ENCODE measurements at regions of chr15 and their contacts with region 1.

Region 1: DNA sequence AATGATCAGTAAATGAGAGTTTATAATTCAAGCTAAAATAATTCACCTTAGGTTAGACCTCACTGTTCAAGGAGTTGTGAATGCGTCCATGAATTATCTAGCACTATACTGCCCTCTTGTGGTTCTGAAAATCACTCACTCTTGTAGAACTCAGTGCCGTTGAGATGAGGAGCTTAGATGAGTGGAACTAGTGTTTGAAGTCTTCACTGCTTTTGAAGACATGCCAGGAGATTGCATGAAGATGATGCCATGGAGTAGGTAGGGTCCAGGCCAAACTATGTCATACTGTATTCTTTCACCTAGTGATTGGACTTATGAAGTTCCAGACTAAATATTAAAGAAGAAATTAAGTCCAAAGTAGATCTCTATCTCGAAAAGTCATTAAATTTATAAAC is 28.8 kb downstream of the LYSMD4 start:
- DNase-seq: peak in 4 of 9 experiments; percentile 19 to 85 (median 58)
- ATAC-seq: peak; percentile 74
- H3K4me3 ChIP-seq: no peak overlapping the region
- H3K4me3 Mint-ChIP-seq: no peak overlapping the region
- H3K27ac ChIP-seq: no peak overlapping the region
- H3K27ac Mint-ChIP-seq: no peak overlapping the region
- H3K4me1 ChIP-seq: peaks cover 38% of the 10 kb centered on the region
- H3K4me1 Mint-ChIP-seq: peaks cover 51% of the 10 kb centered on the region
- H3K27me3 ChIP-seq: no peaks in the 10 kb centered on the region
- H3K27me3 Mint-ChIP-seq: no peaks in the 10 kb centered on the region
- CTCF ChIP-seq: peak; percentile 63

Region 2: GRCh38 chr15:99282121-99282520 is 422.3 kb before region 1 on chr15:
- CTCF ChIA-PET with region 1: interaction called, 29 read pairs
- POLR2A ChIA-PET with region 1: interaction called, 3 read pairs
- intact Hi-C with region 1: loop called (anchors 1 kb)
- DNase-seq: no peak
- ATAC-seq: no peak
- H3K4me3 ChIP-seq: no peak overlapping the region
- H3K4me3 Mint-ChIP-seq: no peak overlapping the region
- H3K27ac ChIP-seq: no peak overlapping the region
- H3K27ac Mint-ChIP-seq: no peak overlapping the region
- H3K4me1 ChIP-seq: no peaks in the 10 kb centered on the region
- H3K4me1 Mint-ChIP-seq: peaks cover 14% of the 10 kb centered on the region
- H3K27me3 ChIP-seq: no peaks in the 10 kb centered on the region
- H3K27me3 Mint-ChIP-seq: no peaks in the 10 kb centered on the region
- CTCF ChIP-seq: no peak

Region 3: DNA sequence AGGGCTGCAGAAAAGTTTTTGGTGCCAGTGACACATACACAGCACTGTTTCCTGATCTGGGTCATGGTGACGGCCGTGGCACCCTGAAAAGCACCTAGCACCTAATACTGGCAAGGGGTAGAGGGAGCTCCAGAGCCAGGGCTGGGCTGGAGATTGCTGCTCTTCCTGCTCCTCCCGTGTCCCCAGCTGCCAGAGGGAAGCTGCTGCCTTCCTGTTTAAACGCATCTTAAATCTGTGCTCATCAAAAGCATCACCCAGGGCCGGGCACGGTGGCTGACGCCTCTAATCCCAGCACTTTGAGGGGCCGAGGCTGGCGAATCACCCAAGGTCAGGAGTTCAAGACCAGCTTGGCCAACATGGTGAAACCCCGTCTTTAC is 295.4 kb before region 1 on chr15:
- CTCF ChIA-PET with region 1: interaction called, 34 read pairs
- POLR2A ChIA-PET with region 1: interaction called, 4 read pairs
- intact Hi-C with region 1: loop called (anchors 1 to 5 kb)
- DNase-seq: peak in 5 of 9 experiments; percentile 22 to 65 (median 50)
- ATAC-seq: peak; percentile 77
- H3K4me3 ChIP-seq: no peak overlapping the region
- H3K4me3 Mint-ChIP-seq: no peak overlapping the region
- H3K27ac ChIP-seq: no peak overlapping the region
- H3K27ac Mint-ChIP-seq: no peak overlapping the region
- H3K4me1 ChIP-seq: peaks cover 20% of the 10 kb centered on the region
- H3K4me1 Mint-ChIP-seq: peaks cover 24% of the 10 kb centered on the region
- H3K27me3 ChIP-seq: no peaks in the 10 kb centered on the region
- H3K27me3 Mint-ChIP-seq: no peaks in the 10 kb centered on the region
- CTCF ChIP-seq: peak; percentile 25

Region 4: DNA sequence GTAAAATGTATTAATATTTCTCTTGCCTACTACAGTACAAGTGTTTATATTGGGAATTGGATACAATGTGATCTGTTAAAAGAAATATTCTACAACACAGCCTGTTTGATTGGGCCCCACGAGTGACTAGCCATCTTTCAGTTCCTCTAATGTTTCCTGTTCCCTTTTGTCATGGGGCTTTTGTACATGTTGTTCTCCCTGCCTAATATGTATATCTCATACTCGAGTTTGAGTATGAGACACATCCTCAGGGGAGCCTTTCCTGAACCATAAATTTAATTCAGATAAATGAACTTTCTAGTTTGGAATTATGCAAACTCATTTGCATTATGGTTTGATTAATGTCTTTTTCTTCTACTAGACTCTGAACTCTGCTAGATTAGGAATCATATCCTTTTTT is 73.2 kb before region 1 on chr15:
- CTCF ChIA-PET with region 1: no interaction called
- POLR2A ChIA-PET with region 1: no interaction called
- intact Hi-C with region 1: no loop called
- DNase-seq: peak in 1 of 9 experiments; percentile 16
- ATAC-seq: no peak
- H3K4me3 ChIP-seq: no peak overlapping the region
- H3K4me3 Mint-ChIP-seq: no peak overlapping the region
- H3K27ac ChIP-seq: no peak overlapping the region
- H3K27ac Mint-ChIP-seq: peak overlapping the region; percentile 2
- H3K4me1 ChIP-seq: no peaks in the 10 kb centered on the region
- H3K4me1 Mint-ChIP-seq: peaks cover 48% of the 10 kb centered on the region
- H3K27me3 ChIP-seq: no peaks in the 10 kb centered on the region
- H3K27me3 Mint-ChIP-seq: no peaks in the 10 kb centered on the region
- CTCF ChIP-seq: no peak

Region 5: GRCh38 chr15:99686290-99686689 is 18.2 kb before region 1 on chr15:
- CTCF ChIA-PET with region 1: interaction called, 25 read pairs
- POLR2A ChIA-PET with region 1: interaction called, 3 read pairs
- intact Hi-C with region 1: no loop called
- DNase-seq: no peak
- ATAC-seq: no peak
- H3K4me3 ChIP-seq: no peak overlapping the region
- H3K4me3 Mint-ChIP-seq: no peak overlapping the region
- H3K27ac ChIP-seq: no peak overlapping the region
- H3K27ac Mint-ChIP-seq: no peak overlapping the region
- H3K4me1 ChIP-seq: peaks cover 18% of the 10 kb centered on the region
- H3K4me1 Mint-ChIP-seq: peaks cover 31% of the 10 kb centered on the region
- H3K27me3 ChIP-seq: no peaks in the 10 kb centered on the region
- H3K27me3 Mint-ChIP-seq: no peaks in the 10 kb centered on the region
- CTCF ChIP-seq: no peak

Region 6: DNA sequence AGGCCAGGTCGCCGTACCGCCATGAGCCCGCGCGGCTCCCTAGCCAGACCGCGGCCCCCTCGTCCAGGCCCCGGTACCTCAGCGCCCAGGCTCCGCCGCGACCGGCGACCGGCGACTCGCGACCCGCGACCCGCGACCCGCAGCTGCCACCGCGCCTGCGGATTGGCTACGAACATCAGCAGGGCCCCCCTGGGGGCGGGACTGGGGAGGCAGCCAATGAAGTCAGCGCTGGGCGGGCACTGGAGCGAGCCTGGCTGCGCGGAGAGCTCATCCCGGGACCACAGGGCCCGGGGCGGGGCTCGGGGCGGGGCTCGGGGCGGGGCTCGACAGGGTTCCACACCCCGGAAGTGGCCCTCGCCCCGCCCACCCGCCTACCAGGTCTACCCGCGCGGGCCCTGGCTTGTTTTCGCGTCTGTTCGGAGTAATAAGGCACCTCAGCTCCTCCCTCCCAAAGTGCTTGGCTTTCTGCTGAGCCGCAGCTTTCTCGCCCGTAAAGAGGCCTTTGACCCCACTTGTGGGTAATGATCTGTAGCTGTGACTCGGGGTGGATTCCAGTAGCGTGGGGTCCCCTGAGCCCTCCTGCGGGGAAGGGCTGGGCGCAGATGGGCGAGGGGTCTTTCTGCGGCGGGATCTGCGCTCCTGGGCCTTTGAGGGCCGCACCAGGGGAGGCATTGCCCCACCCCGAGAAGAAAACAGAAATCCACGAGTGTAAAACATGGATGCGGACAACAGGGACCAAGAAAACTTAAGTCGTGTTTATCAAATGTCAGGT is 29.0 kb after region 1 on chr15 and contains the start of gene LYSMD4:
- CTCF ChIA-PET with region 1: interaction called, 12 read pairs
- POLR2A ChIA-PET with region 1: interaction called, 4 read pairs
- intact Hi-C with region 1: loop called (anchors 1 to 2 kb)
- DNase-seq: peak; percentile 97 to 99 (median 98)
- ATAC-seq: peak; percentile 99
- H3K4me3 ChIP-seq: peak within 1 kb of the TSS; percentile 69 to 80
- H3K4me3 Mint-ChIP-seq: peak within 1 kb of the TSS; percentile 89
- H3K27ac ChIP-seq: peak within 1 kb of the TSS; percentile 62 to 87
- H3K27ac Mint-ChIP-seq: peak within 1 kb of the TSS; percentile 95
- H3K4me1 ChIP-seq: peaks cover 13% of the 10 kb centered on the region
- H3K4me1 Mint-ChIP-seq: peaks cover 19% of the 10 kb centered on the region
- H3K27me3 ChIP-seq: no peaks in the 10 kb centered on the region
- H3K27me3 Mint-ChIP-seq: no peaks in the 10 kb centered on the region
- CTCF ChIP-seq: no peak
- total RNA-seq, gene LYSMD4: 7.6 to 7.7 TPM

Measured in CD8-positive, alpha-beta T cell (primary cell).